PC-9 (cell line): ENCODE measurements at regions of chr14 and their contacts with region 1.

Region 1: GRCh38 chr14:59126710-59127432 is 61.6 kb upstream of the DAAM1 start:
- DNase-seq: peak; percentile 25 to 56
- H3K4me3 ChIP-seq: no peak overlapping the region
- H3K27ac ChIP-seq: no peak overlapping the region
- H3K4me1 ChIP-seq: no peaks in the 10 kb centered on the region
- H3K27me3 ChIP-seq: no peaks in the 10 kb centered on the region
- CTCF ChIP-seq: peak; percentile 87

Region 2: DNA sequence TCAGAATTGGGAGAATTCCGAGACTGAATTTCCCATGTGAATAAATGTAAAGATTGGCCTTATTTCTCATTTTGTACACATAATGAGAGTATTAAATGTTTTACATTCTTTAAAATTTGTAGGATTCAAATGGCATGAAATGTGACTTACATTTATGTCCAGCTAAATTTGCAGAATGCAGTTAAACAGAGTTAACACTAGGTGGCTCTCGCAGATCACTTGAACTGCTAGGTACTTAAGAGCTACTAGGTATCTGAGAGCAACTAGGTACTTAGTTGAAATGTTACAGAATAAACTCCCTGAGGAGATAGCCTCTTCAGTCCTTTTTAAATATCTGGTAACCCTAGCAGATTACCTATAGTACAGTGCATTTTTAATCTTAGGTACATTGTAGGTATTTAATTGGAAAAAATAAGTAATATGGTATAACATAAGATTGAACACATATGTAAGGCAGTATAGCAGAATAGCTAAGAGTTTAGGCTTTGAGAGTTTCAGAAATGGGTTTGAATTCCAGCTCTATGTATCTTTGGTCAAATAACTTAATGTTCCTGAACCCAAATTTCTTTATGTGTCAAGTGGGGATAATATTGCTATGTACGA is 625.6 kb before region 1 on chr14:
- CTCF ChIA-PET with region 1: no interaction called
- POLR2A ChIA-PET with region 1: no interaction called
- intact Hi-C with region 1: loop called (anchors 2 kb)
- DNase-seq: peak; percentile 2 to 51
- H3K4me3 ChIP-seq: no peak overlapping the region
- H3K27ac ChIP-seq: no peak overlapping the region
- H3K4me1 ChIP-seq: no peaks in the 10 kb centered on the region
- H3K27me3 ChIP-seq: no peaks in the 10 kb centered on the region
- CTCF ChIP-seq: peak; percentile 86

Region 3: DNA sequence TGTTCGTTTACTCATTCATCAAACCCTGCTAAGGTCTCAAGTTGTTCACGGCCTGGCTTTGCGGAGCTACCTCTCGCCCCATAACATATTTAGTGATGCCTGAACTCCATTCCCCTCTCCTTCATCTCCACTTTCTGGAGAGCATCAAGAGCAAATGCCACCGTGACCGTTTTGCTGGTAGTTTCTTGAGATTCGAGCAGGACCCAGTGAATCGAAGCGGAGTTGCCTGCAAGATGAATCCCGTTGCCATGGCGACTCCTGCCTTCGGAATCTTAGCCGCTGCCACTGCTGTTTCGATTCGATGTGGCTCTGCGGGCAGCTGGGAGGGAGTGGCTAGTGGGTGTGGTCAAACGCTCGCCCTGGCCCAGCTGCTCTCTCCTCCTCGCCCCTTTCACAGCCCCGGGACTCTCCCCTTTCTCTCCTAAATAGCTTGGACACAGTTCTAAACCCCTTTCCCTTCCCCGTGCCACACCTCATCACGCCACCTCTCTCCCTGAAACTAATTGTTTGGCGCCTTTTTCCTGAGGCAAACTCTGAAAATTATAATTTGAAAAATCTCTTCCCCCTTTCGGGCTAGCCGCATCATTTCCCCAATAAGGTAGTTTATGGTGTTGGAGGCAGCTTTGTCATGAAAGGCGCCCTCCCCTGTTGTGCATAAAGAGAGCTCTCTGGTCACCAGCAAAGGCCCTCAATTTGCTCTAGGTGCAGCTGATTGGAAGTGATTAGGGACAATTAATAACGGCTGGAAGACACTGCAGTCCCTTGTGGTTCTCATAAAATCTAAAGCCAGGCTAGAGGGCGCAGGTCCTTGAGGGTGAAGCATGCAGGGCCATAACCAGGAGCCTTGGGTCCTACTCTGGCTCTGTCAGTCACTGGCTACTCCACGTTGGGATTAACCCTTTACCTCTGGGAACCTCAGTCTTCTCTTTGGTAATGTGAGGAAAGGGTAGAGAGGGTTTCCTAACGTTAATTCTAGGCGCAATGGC is 63.2 kb after region 1 on chr14:
- CTCF ChIA-PET with region 1: no interaction called
- POLR2A ChIA-PET with region 1: no interaction called
- intact Hi-C with region 1: loop called (anchors 1 kb)
- DNase-seq: peak; percentile 78 to 79
- H3K4me3 ChIP-seq: peak overlapping the region; percentile 90
- H3K27ac ChIP-seq: no peak overlapping the region
- H3K4me1 ChIP-seq: peaks cover 29% of the 10 kb centered on the region
- H3K27me3 ChIP-seq: no peaks in the 10 kb centered on the region
- CTCF ChIP-seq: no peak; the same call in 1 of the 2 replicates

Region 4: DNA sequence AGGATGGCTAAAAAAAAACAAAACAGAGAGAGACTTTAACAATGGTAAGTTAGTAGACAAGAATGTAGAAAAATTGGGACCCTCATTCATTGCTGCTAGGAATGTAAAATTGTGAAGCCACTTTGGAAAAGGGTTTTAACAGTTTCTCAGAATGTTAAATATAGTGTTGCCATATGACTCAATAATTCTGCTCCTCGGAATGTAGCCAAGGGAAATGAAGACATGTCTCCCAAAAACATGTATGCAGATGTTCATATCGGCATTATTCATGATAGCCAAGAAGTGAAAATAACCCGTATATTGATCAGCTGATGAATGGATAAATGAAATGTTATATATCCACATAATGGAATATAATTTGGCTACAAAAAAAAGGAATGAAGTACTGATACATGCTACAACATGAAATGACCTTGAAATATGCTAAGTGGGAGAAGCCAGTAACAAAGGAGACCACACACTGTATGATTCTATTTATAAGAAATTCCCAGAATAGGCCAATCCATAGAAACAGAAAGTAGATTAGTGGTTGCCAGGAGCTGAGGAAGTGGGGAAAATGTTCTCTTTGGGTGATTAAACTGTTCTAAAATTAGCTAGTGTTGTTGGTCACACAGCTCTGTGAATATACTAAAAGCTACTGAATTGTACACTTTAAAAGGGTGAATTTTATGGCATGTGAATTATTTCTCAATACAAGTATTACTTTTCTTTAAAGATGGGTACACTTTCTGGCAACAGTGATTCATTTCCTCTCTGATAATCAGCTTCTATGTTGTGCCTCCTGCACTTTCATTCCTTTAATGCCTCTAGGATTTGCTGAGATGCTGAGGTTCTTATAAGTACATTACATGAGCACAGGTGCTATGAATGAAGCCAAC is 194.1 kb after region 1 on chr14:
- CTCF ChIA-PET with region 1: no interaction called
- POLR2A ChIA-PET with region 1: no interaction called
- intact Hi-C with region 1: loop called (anchors 1 kb)
- DNase-seq: peak in 1 of 2 experiments; percentile 94
- H3K4me3 ChIP-seq: 0 out of 2 replicates have a peak overlapping the region, but pooled peaks have one; percentile 2
- H3K27ac ChIP-seq: peak overlapping the region; percentile 71
- H3K4me1 ChIP-seq: peaks cover 29% of the 10 kb centered on the region
- H3K27me3 ChIP-seq: no peaks in the 10 kb centered on the region
- CTCF ChIP-seq: no peak

Region 5: GRCh38 chr14:59360923-59361794 is 234.3 kb after region 1 on chr14:
- CTCF ChIA-PET with region 1: interaction called, 3 read pairs
- POLR2A ChIA-PET with region 1: no interaction called
- intact Hi-C with region 1: loop called (anchors 2 kb)
- DNase-seq: peak; percentile 88 to 99
- H3K4me3 ChIP-seq: peak overlapping the region; percentile 33; the same call in 1 of the 2 replicates
- H3K27ac ChIP-seq: peak overlapping the region; percentile 86
- H3K4me1 ChIP-seq: peaks cover 100% of the 10 kb centered on the region
- H3K27me3 ChIP-seq: no peaks in the 10 kb centered on the region
- CTCF ChIP-seq: no peak

Region 6: DNA sequence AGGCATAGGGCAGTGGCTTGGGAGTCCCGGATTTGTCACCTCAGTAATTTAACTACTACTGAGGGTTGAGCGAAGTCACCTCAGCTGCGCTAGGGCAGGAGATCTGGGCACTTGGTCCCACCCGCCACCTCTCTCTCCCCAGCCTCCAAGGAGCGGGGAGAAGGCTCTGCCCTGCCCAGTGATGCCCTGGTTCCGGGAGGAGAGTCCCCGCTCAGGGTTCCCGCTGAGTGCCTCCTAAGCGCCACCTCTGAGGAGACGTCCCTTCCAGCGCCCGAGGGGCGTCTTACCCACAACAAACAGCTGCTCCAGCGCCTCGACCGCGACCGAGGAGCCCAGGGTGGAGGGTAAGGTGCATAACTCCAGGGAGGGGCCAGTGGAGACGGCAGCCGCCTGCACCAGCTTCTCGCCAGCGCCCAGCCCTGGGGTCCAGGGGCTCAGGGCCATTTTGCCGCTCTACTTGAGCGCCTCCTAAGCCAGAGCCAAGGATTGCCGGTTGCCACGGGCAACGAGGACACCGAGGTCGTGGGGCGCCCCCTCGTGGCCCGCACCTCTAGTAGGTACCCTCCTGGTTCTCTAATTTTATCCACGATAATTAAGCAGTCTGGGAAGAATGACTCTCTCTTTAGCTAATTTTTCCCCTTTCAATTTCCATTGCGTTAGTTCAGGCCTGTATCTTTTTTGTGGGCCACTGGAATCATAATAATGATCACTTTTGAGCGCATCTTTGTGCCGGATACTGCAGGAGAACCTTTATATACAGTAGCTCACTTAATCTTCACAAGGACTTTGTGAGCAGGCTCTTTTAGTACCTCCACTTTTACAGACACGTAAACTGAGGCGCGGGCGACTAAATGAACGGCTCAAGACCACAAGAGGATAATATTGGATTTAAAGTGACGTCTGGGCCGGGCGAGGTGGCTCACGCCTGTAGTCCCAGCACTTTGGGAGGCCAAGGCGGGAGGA is 449.7 kb after region 1 on chr14 and contains the start of gene CCDC175:
- CTCF ChIA-PET with region 1: no interaction called
- POLR2A ChIA-PET with region 1: no interaction called
- intact Hi-C with region 1: loop called (anchors 2 kb)
- DNase-seq: peak in 1 of 2 experiments; percentile 48
- H3K4me3 ChIP-seq: no peak within 1 kb of the TSS
- H3K27ac ChIP-seq: no peak within 1 kb of the TSS
- H3K4me1 ChIP-seq: no peaks in the 10 kb centered on the region
- H3K27me3 ChIP-seq: no peaks in the 10 kb centered on the region
- CTCF ChIP-seq: peak; percentile 53; the same call in 1 of the 2 replicates
- total RNA-seq, gene CCDC175: not detected in 2 replicates